ENCODE measurements at regions of chr6 and their contacts with region 1.

Region 1: GRCh38 chr6:47631269-47631772 is 67.1 kb upstream of the ADGRF4 start:
- DNase-seq: no peak
- H3K4me3 Mint-ChIP-seq: no peak overlapping the region
- H3K27ac Mint-ChIP-seq: no peak overlapping the region
- H3K4me1 Mint-ChIP-seq: peaks cover 6% of the 10 kb centered on the region
- H3K27me3 Mint-ChIP-seq: no peaks in the 10 kb centered on the region

Region 2: DNA sequence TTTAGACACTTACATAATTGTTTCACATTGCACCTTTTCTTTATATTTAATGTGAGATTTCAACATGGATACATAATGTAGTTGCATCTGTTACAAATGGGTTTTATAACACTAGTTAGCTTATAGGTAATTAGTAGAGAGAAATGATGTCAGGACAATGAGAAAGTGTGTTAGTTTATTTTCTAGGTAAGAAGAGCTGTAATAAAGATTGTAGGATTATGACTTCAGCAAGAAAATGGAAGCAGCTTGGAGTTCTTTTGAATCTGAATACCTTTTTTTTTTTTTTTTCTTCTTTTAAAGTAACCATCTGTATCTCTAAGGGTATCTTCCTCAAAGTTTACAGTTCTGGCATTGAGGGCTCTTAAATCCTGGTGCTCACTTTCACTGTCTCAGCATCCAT is 118.4 kb before region 1 on chr6:
- CTCF ChIA-PET with region 1: no interaction called
- POLR2A ChIA-PET with region 1: no interaction called
- intact Hi-C with region 1: no loop called
- DNase-seq: no peak
- H3K4me3 Mint-ChIP-seq: no peak overlapping the region
- H3K27ac Mint-ChIP-seq: no peak overlapping the region
- H3K4me1 Mint-ChIP-seq: peaks cover 23% of the 10 kb centered on the region
- H3K27me3 Mint-ChIP-seq: no peaks in the 10 kb centered on the region

Region 3: DNA sequence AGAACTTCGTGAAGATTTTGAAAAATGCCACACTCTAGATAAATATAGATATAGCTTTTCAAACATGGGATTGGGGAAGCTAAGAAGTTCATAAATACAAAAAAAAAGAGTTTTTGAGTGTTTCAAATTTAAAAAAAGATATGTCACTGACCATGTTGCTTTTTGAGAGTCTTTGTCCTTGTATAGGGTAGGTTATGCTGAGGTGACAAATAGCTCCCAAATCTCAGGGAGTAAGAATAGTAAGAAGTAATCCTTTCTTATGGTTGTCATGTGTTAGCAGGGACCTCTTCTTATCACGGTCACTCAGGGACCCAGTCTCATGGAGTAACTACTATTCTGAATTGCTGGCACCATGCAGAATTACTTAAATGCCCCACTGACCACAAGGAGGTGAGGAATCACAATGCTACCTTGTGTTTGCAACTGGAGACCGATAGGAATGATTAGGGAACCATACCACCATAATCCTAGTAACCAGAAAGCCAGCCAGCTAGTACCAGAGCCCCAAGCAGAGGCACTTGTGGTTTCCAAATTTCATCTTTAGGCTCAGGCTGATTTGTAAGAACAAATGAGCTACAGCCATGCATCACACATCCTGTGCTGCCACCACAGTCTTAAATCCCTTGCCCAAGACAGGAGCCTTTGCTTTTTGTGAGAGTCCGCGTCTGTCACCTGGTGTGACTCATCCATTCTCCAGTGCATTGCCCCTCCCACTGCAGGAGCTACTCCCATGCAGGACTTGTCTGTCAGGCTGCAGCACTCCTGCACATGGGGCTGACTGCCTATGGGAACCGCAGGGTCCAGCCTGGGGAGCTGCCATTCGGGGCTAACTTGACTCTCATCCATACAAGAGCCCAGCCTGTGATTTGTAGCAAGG is 24.6 kb after region 1 on chr6:
- CTCF ChIA-PET with region 1: interaction called, 12 read pairs
- POLR2A ChIA-PET with region 1: no interaction called
- intact Hi-C with region 1: no loop called
- DNase-seq: peak; percentile 62
- H3K4me3 Mint-ChIP-seq: no peak overlapping the region
- H3K27ac Mint-ChIP-seq: no peak overlapping the region
- H3K4me1 Mint-ChIP-seq: no peaks in the 10 kb centered on the region
- H3K27me3 Mint-ChIP-seq: no peaks in the 10 kb centered on the region

Region 4: DNA sequence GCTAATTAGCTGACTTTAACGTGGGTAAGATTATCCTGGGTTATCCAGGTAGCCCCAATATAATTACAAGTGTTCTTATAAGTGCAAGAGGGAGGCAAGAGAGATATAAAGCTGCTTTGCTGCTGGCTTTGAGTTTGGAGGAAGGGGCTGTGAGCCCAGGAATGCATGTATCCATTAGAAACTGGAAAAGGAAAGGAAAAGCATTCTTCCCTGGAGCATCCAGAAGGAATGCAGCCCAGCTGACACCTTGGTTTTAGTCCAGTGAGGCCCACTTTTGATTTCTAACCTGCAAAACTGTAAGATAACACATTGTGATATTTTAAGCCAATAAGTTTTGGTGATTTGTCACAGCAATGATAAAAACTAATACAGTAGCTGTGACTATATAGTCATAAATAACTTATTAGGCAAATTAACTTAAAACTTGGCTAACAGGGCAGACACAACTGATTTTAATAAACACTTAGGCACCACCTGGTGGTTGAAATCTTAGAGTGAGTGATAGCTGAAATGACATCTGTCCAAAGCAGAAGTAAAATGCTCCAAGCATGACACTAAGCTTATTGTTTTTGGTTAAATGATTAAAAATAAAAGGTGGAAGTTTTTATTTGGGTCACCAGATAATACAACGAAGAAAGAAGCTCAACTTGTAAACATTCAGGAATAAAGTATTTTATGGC is 102.7 kb after region 1 on chr6:
- CTCF ChIA-PET with region 1: interaction called, 38 read pairs
- POLR2A ChIA-PET with region 1: no interaction called
- intact Hi-C with region 1: loop called (anchors 1 kb)
- DNase-seq: no peak
- H3K4me3 Mint-ChIP-seq: no peak overlapping the region
- H3K27ac Mint-ChIP-seq: no peak overlapping the region
- H3K4me1 Mint-ChIP-seq: peaks cover 4% of the 10 kb centered on the region
- H3K27me3 Mint-ChIP-seq: peaks cover 2% of the 10 kb centered on the region

Region 5: DNA sequence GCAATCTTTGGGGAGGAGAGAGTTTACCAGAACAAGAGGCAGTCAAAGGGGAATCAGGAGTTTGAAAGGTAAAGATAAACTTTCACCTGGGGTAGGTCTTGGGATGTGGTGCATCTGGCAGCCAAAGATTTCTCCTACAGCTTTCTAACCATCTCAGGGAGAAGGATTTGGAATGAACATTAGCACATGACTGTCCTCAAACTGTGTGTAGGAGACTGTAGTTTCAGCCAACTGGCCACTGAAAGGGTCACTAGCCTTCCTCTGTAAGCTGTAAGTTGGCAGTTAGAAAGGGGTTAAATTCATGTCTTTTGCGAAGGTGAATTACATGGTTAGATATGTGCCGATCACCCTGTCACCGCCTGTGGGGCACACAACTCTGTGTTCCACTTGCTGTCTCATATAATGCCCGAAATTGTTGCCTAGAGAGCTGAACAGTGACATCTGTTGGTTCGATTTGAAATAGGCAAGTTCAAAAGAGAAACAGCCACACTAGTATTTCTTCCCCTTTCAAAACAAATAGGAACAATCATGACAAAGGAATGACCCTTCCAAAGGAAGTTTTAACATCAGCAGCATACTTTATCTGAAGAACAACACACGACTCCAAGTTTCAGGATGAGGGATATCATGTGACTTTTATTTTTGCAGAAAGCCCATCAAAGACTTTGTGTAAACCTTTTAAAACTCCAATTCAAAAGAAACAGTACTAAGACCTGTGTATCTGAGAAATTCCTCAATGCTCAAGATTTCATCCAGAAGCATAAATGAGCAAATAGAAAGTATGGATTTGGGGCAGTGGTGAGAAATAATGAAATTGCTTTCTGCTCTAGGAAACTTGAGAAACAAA is 149.4 kb after region 1 on chr6:
- CTCF ChIA-PET with region 1: interaction called, 143 read pairs
- POLR2A ChIA-PET with region 1: no interaction called
- intact Hi-C with region 1: loop called (anchors 1 kb)
- DNase-seq: peak; percentile 45
- H3K4me3 Mint-ChIP-seq: no peak overlapping the region
- H3K27ac Mint-ChIP-seq: no peak overlapping the region
- H3K4me1 Mint-ChIP-seq: peaks cover 8% of the 10 kb centered on the region
- H3K27me3 Mint-ChIP-seq: peaks cover 2% of the 10 kb centered on the region

Region 6: DNA sequence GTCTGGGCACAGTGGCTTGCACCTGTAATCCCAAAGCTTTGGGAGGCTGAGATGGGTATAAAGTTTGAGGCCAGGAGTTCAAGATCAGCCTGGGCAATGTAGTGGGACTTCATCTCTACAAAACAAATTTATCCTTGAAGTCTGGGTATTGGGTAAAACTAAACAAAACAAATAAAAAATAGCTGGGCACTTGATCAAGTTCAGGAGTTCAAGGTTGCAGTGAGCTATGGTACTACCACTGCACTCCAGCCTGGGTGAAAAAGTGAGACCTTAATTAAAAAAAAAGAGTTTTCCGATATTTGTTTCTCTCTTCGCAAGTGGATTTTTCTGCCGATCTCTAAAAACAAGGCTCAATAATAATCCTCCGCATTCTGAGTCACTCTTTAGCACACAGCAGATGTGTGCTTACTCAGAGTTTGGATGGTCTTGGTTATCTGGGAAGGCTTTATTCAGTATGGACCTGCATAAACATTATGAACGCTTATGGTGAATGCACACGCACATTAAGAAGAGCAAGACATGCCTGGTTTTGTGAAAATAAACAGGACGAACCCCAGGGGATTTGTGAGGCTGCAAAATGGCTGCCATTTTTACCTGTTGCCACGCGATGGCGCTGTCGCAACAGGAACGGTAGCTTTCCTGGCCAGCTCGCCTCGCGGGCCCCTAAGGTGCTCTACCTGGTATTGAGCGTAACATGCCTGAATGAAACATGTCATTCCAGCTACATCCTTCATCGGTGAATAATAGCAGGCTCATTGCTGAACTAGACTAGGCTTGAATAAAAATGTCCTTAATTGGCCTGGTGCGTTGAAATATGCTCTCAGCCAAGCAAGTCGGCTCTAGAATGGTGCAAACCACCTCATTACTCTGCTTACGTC is 156.5 kb after region 1 on chr6:
- CTCF ChIA-PET with region 1: interaction called, 143 read pairs
- POLR2A ChIA-PET with region 1: no interaction called
- intact Hi-C with region 1: no loop called
- DNase-seq: peak; percentile 65
- H3K4me3 Mint-ChIP-seq: no peak overlapping the region
- H3K27ac Mint-ChIP-seq: no peak overlapping the region
- H3K4me1 Mint-ChIP-seq: peaks cover 1% of the 10 kb centered on the region
- H3K27me3 Mint-ChIP-seq: peaks cover 13% of the 10 kb centered on the region

Measured in activated CD4-positive, alpha-beta memory T cell treated with anti-CD3 and anti-CD28 coated beads for 36 hours (primary cell).